SK-N-SH (cell line): ENCODE measurements at regions of chr16 and their contacts with region 1.

Region 1: GRCh38 chr16:49855280-49855821 is 561 bp downstream of the ZNF423 start:
- DNase-seq: peak; percentile 83
- H3K4me3 ChIP-seq: peak overlapping the region; percentile 61 to 68
- H3K27ac ChIP-seq: peak overlapping the region in 1 of 2 experiments; percentile 92; a peak in 2 of 4 replicates
- H3K4me1 ChIP-seq: peaks cover 13 to 46% of the 10 kb centered on the region in 2 experiments; a peak in 3 of 4 replicates
- H3K27me3 ChIP-seq: peaks cover 8% of the 10 kb centered on the region
- CTCF ChIP-seq: no peak
- EP300 ChIP-seq: no peak
- RAD21 ChIP-seq: no peak

Region 2: GRCh38 chr16:49575391-49575790 is 280.0 kb before region 1 on chr16:
- CTCF ChIA-PET with region 1: interaction called, 10 read pairs
- POLR2A ChIA-PET with region 1: no interaction called
- DNase-seq: no peak
- H3K4me3 ChIP-seq: no peak overlapping the region
- H3K27ac ChIP-seq: no peak overlapping the region; a peak in 1 of 4 replicates
- H3K4me1 ChIP-seq: peaks cover 0 to 50% of the 10 kb centered on the region in 2 experiments; a peak in 1 of 4 replicates
- H3K27me3 ChIP-seq: no peaks in the 10 kb centered on the region
- CTCF ChIP-seq: no peak
- EP300 ChIP-seq: no peak
- RAD21 ChIP-seq: no peak

Region 3: GRCh38 chr16:49639739-49640431 is 215.5 kb before region 1 on chr16:
- CTCF ChIA-PET with region 1: interaction called, 18 read pairs
- POLR2A ChIA-PET with region 1: interaction called, 6 read pairs
- DNase-seq: peak; percentile 81
- H3K4me3 ChIP-seq: no peak overlapping the region; a peak in 1 of 4 replicates
- H3K27ac ChIP-seq: peak overlapping the region; percentile 66 to 85
- H3K4me1 ChIP-seq: peaks cover 29 to 81% of the 10 kb centered on the region in 2 experiments
- H3K27me3 ChIP-seq: no peaks in the 10 kb centered on the region
- CTCF ChIP-seq: no peak
- EP300 ChIP-seq: peak in 1 of 2 experiments; percentile 69; a peak in 2 of 4 replicates
- RAD21 ChIP-seq: peak; percentile 11; the same call in 1 of the 2 replicates

Region 4: DNA sequence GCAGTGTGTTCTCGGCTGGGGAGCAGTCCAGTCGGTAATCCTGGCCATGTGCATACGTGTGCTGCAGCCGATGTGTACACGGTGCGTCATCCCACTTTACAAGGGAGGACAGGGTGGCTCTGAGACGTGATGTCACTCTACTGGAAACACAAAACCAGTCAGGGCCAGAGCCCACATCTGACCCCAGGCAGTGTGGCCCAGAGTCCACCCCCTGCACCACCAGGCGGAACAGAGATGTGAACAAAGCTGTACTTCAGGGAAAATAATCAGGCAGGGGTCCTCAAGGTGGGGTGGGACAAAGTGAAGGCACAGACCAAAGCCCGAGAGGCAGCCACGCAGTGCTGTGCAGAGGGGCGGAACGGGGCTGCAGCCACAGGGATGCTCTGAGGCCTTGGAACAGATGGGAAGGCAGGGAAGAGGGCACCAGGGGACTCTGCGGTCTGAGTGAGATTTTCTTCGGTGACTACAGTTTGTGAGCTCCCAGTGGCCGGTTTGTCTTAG is 180.9 kb before region 1 on chr16:
- CTCF ChIA-PET with region 1: no interaction called
- POLR2A ChIA-PET with region 1: no interaction called
- DNase-seq: no peak
- H3K4me3 ChIP-seq: no peak overlapping the region
- H3K27ac ChIP-seq: no peak overlapping the region
- H3K4me1 ChIP-seq: peaks cover 0 to 36% of the 10 kb centered on the region in 2 experiments; a peak in 1 of 4 replicates
- H3K27me3 ChIP-seq: no peaks in the 10 kb centered on the region
- CTCF ChIP-seq: no peak
- EP300 ChIP-seq: no peak
- RAD21 ChIP-seq: no peak

Region 5: DNA sequence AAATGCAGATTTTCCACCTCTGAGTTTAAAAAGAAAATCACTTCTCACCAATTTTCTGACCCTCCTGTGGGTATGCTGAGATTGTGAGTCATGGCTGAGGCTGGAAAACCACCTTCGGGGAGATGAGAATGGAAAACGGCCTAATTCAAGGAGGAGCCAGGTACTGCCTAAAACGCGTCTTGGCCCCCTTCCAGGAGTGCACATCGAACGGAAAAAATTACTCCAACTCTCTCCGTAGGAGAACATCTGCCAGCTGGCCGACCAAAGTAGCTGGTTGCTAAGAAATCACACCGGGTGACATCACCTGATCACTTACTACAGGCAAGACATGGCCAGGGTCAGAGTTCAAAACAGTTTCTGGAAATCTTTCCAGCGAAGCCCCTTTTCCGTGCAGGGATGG is 107.0 kb before region 1 on chr16:
- CTCF ChIA-PET with region 1: interaction called, 21 read pairs
- POLR2A ChIA-PET with region 1: no interaction called
- DNase-seq: no peak
- H3K4me3 ChIP-seq: no peak overlapping the region
- H3K27ac ChIP-seq: peak overlapping the region in 1 of 2 experiments; percentile 53; a peak in 1 of 4 replicates
- H3K4me1 ChIP-seq: peaks cover 0 to 85% of the 10 kb centered on the region in 2 experiments; a peak in 3 of 4 replicates
- H3K27me3 ChIP-seq: no peaks in the 10 kb centered on the region
- CTCF ChIP-seq: no peak
- EP300 ChIP-seq: no peak
- RAD21 ChIP-seq: no peak

Region 6: DNA sequence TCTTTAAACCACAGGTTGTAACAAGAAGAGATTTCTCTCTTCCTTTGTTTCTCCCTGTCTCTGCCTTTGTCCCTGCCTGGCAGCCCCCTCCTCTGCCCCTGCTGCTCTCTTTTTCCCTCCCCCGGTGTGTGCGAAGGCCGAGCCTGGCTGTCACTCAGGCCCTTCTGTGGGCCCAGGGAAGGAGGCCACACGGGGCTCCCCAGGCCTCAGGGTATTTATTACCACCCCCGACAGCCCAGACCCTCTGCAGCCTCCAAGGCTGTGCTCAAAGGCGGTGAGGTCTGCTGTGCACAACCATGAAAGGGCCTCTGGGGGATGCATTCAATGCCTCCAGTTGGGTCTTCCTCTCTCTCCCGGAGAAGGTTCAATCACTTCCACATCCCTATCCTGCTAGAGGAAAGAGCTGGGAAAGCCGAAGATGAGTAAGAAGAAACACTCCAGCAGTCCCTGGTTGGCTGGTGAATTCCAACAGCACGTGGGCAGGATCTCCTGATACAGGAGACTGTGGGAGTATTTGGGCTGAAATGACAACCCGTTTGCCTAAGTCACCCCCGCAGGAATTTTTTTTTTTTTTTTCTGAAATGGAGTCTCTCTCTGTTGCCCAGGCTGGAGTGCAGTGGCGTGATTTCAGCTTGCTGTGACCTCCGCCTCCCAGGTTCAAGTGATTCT is 33.6 kb before region 1 on chr16:
- CTCF ChIA-PET with region 1: interaction called, 18 read pairs
- POLR2A ChIA-PET with region 1: no interaction called
- DNase-seq: peak; percentile 64
- H3K4me3 ChIP-seq: no peak overlapping the region
- H3K27ac ChIP-seq: peak overlapping the region in 1 of 2 experiments; percentile 91; a peak in 2 of 4 replicates
- H3K4me1 ChIP-seq: peaks cover 4 to 41% of the 10 kb centered on the region in 2 experiments; a peak in 2 of 4 replicates
- H3K27me3 ChIP-seq: no peaks in the 10 kb centered on the region
- CTCF ChIP-seq: no peak
- EP300 ChIP-seq: no peak
- RAD21 ChIP-seq: no peak

Region 7: DNA sequence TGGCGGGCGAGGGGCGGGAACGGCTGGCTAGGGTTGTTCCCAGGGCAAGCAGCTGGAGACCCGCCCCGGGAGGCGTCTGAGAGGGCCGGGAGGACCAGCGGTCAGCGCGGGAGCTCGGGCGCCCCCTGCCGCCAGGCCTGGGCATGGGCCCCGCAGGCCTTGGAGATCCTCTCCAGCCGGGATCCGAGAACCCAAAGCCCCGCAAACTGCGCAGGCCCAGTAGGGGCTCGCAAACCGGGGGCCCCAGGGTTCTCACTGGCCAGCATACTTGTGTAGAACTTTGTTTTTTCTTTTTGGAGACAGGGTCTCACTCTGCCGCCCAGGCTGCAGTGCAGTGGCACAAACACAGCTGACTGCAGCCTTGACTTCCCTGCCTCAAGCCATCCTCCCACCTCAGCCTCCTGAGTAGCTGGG is 21.4 kb after region 1 on chr16:
- CTCF ChIA-PET with region 1: interaction called, 34 read pairs
- POLR2A ChIA-PET with region 1: interaction called, 3 read pairs
- DNase-seq: peak; percentile 92
- H3K4me3 ChIP-seq: peak overlapping the region in 1 of 2 experiments; percentile 51; a peak in 1 of 4 replicates
- H3K27ac ChIP-seq: no peak overlapping the region
- H3K4me1 ChIP-seq: no peaks in the 10 kb centered on the region
- H3K27me3 ChIP-seq: no peaks in the 10 kb centered on the region; the same call in none of the 2 replicates
- CTCF ChIP-seq: peak; percentile 64
- EP300 ChIP-seq: no peak
- RAD21 ChIP-seq: peak; percentile 43

Region 8: DNA sequence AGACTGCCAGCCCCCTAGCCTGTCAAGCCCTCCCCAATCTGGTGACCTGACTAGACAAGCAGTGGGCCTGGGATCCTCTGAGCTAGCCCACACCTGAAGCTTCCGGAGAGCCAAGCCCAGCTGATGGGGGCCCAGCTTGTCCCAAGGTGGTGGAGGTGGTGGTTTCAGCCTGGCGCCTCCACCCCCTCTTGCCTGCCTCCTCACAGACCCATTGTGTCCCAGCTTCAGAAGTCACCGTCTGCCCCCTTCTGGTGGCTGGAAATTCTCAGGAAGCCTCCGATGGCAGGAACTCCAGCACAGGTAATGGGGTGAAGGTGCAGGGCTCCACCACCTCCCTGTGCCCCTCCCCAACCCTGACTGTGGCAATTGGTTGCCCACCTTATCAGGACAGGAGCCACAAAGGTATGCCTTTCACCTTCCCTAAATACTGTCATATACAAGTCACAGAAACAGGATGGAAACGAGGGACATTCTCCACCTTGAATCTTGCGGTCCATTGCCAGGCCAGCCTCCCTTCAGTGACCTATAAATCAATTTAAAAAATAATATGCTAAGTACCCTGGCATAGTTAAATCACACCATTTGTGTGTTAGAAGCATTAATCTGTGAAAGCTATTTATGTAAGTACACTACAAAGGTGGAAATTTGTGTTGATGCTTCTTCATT is 66.6 kb after region 1 on chr16:
- CTCF ChIA-PET with region 1: interaction called, 94 read pairs
- POLR2A ChIA-PET with region 1: interaction called, 4 read pairs
- DNase-seq: peak; percentile 86
- H3K4me3 ChIP-seq: no peak overlapping the region
- H3K27ac ChIP-seq: no peak overlapping the region
- H3K4me1 ChIP-seq: peaks cover 0 to 3% of the 10 kb centered on the region in 2 experiments; a peak in 1 of 4 replicates
- H3K27me3 ChIP-seq: no peaks in the 10 kb centered on the region
- CTCF ChIP-seq: peak; percentile 65
- EP300 ChIP-seq: no peak
- RAD21 ChIP-seq: peak; percentile 92

Region 9: DNA sequence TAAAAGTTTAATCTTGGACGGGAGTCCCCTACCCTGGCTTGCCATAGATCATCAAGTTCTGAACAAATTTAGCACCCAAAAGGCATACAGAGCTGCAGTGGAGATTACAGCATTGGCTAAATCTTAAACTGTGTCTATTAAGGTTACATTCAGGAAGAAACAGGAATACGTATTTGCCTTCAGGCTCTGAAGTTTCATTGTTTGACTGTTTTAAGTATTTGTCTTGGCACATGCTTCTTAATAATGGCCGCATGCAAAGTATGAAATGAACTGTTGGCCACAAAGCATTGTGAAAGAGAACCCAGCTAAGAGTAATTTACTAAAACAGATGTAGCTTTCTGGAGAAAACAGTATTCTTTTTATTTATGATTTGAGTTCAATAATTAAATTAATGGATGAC is 105.7 kb after region 1 on chr16:
- CTCF ChIA-PET with region 1: no interaction called
- POLR2A ChIA-PET with region 1: no interaction called
- DNase-seq: no peak
- H3K4me3 ChIP-seq: no peak overlapping the region
- H3K27ac ChIP-seq: no peak overlapping the region
- H3K4me1 ChIP-seq: peaks cover 0 to 19% of the 10 kb centered on the region in 2 experiments; a peak in 1 of 4 replicates
- H3K27me3 ChIP-seq: no peaks in the 10 kb centered on the region; the same call in 1 of the 2 replicates
- CTCF ChIP-seq: no peak
- EP300 ChIP-seq: no peak
- RAD21 ChIP-seq: no peak